Posterior vena cava (tissue), 2 donors: ENCODE measurements at regions of chr11 and their contacts with region 1.

Region 1: GRCh38 chr11:118851970-118852369 is 31.7 kb upstream of the CXCR5 start:
- DNase-seq: no peak

Region 2: GRCh38 chr11:118820412-118821357 is 31.3 kb before region 1 on chr11:
- intact Hi-C with region 1: no loop called
- DNase-seq: peak; percentile 84

Region 3: DNA sequence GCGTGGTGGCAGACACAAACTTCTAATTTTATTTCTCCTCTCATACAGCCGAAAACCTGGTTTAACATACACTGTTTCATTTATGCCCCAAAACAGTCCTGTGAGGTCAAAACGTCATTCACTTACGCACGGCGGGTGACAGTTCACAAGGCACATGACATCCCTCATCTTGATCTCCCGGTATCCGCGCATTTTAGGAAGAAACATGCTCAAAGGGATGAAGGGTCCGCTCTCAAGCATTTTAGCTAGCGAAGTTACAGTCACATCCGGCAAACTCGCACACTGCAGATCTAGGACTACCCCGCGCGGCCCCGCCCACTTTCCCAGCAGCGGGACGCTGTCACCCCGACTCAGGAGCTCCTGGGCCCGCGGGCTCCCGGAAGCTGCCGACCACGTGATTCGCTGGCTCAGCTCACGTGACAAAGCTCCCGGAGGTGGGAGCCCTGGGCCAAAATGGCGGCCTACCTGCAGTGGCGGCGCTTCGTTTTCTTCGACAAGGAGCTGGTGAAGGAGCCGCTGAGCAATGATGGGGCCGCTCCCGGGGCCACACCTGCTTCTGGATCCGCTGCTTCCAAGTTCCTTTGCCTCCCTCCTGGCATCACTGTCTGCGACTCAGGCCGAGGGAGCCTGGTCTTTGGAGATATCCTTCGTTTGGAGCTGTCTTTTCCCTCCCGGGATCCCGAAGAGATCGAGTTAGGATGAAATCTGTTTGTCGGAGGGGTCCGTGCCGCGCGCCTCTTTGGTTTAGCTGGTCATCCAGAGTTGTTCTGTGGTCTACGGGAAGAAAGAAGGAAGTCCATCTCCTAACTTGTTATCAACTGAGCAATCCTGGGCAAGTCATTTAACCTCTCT is 215.6 kb after region 1 on chr11 and contains the start of gene VPS11:
- intact Hi-C with region 1: no loop called
- DNase-seq: peak; percentile 99
- total RNA-seq, gene VPS11: 24.8 to 26.6 TPM

Region 4: DNA sequence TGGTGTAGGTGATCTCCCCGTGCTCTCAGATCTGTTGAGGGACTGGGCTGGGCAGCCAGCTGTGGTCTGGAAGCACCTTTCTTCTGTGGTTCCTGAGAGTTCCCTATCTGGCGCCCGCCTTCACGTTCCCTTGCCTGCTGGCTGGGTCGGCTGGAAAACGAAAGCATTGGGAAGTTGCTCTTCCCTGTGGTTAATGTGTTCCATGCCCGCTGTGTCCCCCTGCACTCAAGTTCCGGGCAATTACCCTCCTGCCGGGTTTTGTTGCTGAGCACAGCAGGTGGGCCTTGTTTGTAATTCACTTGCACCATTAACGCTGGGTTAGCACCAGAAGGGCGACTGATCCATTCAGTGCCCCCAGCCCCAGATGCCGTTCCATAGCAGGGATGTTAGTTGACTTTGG is 1793.7 kb after region 1 on chr11:
- intact Hi-C with region 1: loop called in 1 of 2 experiments (anchors 10 kb)
- DNase-seq: peak; percentile 61